ENCODE measurements at regions of chr1 and their contacts with region 1.

Region 1: GRCh38 chr1:240455228-240455821 is 156.6 kb downstream of the GREM2 start:
- DNase-seq: peak in 1 of 2 donors; percentile 51
- ATAC-seq: peak; percentile 24 to 76 (median 65)
- H3K4me3 ChIP-seq: no peak overlapping the region
- H3K4me3 Mint-ChIP-seq: no peak overlapping the region
- H3K27ac ChIP-seq: no peak overlapping the region
- H3K27ac Mint-ChIP-seq: no peak overlapping the region
- H3K4me1 ChIP-seq: no peaks in the 10 kb centered on the region
- H3K4me1 Mint-ChIP-seq: no peaks in the 10 kb centered on the region
- H3K27me3 ChIP-seq: no peaks in the 10 kb centered on the region
- H3K27me3 Mint-ChIP-seq: peaks cover 16 to 22% of the 10 kb centered on the region in 2 donors
- CTCF ChIP-seq: peak; percentile 63

Region 2: GRCh38 chr1:240314845-240315801 is 140.2 kb before region 1 on chr1:
- intact Hi-C with region 1: no loop called
- DNase-seq: no peak
- ATAC-seq: no peak
- H3K4me3 ChIP-seq: no peak overlapping the region
- H3K4me3 Mint-ChIP-seq: no peak overlapping the region
- H3K27ac ChIP-seq: no peak overlapping the region
- H3K27ac Mint-ChIP-seq: no peak overlapping the region
- H3K4me1 ChIP-seq: no peaks in the 10 kb centered on the region
- H3K4me1 Mint-ChIP-seq: no peaks in the 10 kb centered on the region
- H3K27me3 ChIP-seq: no peaks in the 10 kb centered on the region
- H3K27me3 Mint-ChIP-seq: no peaks in the 10 kb centered on the region
- CTCF ChIP-seq: no peak

Region 3: DNA sequence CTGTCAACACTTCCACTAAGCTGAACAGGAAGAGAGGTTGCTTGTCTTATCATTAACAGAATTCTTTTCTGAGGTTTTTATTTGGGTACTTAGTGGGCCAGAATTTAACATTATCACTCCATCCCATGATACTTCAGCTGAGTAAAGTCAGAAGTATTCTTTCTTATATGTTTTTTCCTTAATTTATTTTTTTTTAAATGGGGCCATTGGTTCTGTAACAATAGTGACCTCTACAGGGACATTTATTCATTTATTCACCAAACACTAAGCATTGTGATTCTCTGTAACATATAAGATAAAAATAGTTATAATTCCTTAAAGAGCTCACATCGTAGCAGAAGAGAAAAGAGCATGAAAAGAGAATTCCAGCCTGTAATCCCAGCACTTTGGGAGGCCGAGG is 146.9 kb after region 1 on chr1:
- intact Hi-C with region 1: loop called (anchors 1 kb)
- DNase-seq: no peak
- ATAC-seq: no peak
- H3K4me3 ChIP-seq: no peak overlapping the region
- H3K4me3 Mint-ChIP-seq: no peak overlapping the region
- H3K27ac ChIP-seq: no peak overlapping the region
- H3K27ac Mint-ChIP-seq: no peak overlapping the region
- H3K4me1 ChIP-seq: no peaks in the 10 kb centered on the region
- H3K4me1 Mint-ChIP-seq: no peaks in the 10 kb centered on the region
- H3K27me3 ChIP-seq: no peaks in the 10 kb centered on the region
- H3K27me3 Mint-ChIP-seq: peaks cover 25 to 61% of the 10 kb centered on the region in 2 donors
- CTCF ChIP-seq: no peak

Region 4: GRCh38 chr1:241171991-241172390 is 716.7 kb after region 1 on chr1:
- intact Hi-C with region 1: no loop called
- DNase-seq: no peak
- ATAC-seq: no peak
- H3K4me3 ChIP-seq: no peak overlapping the region
- H3K4me3 Mint-ChIP-seq: no peak overlapping the region
- H3K27ac ChIP-seq: no peak overlapping the region
- H3K27ac Mint-ChIP-seq: no peak overlapping the region
- H3K4me1 ChIP-seq: no peaks in the 10 kb centered on the region
- H3K4me1 Mint-ChIP-seq: no peaks in the 10 kb centered on the region
- H3K27me3 ChIP-seq: no peaks in the 10 kb centered on the region
- H3K27me3 Mint-ChIP-seq: no peaks in the 10 kb centered on the region
- CTCF ChIP-seq: no peak

Measured in natural killer cell (primary cell).